AG04449 (cell line): ENCODE measurements at regions of chr11 and their contacts with region 1.

Region 1: DNA sequence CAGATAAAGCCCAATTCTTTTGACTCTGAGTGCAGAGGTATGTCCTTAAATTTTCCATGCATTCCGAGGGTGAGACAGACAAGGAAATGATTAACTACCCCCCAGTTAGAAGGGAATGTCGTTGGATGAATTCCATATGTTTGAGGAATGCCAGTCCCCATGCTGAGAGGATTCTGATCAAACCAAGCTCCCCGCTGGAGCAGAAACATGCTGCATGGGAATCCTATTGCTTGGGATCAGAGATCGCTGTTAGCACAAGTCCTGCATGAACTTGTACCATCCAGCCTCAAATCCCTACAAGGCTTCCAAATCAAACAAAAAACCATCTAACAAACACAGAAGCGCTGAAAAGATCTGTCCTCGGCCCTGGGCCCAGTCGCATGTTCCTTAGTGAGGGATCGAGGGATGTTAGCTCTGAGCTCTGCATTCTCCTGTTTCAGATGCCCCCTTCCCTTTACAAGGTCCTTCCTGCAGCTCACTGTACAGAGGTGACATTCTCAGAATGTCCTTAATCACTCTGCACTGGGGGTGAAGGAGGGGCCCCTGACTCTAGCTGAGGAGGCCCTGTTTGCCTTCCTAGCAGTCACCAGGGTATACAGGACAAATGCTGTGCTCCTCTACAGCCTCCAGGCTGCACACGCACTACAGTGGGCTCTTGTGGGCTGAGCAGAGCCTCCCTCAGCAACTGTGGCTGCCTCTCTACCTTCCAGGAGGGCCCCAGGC is 353.4 kb downstream of the TENM4 start:
- DNase-seq: peak; percentile 65
- H3K4me3 ChIP-seq: no peak overlapping the region
- CTCF ChIP-seq: no peak

Region 2: GRCh38 chr11:79076526-79077115 is 10.8 kb before region 1 on chr11:
- CTCF ChIA-PET with region 1: interaction called, 10 read pairs
- POLR2A ChIA-PET with region 1: interaction called, 5 read pairs
- DNase-seq: no peak
- H3K4me3 ChIP-seq: no peak overlapping the region
- CTCF ChIP-seq: peak; percentile 52